Tibial artery (tissue), 4 donors: ENCODE measurements at regions of chr4 and their contacts with region 1.

Region 1: GRCh38 chr4:179615704-179616103 is 2173.5 kb upstream of the AGA start:
- DNase-seq: no peak
- H3K4me3 ChIP-seq: no peak overlapping the region
- H3K27ac ChIP-seq: no peak overlapping the region
- H3K4me1 ChIP-seq: no peaks in the 10 kb centered on the region
- H3K27me3 ChIP-seq: no peaks in the 10 kb centered on the region
- CTCF ChIP-seq: no peak

Region 2: GRCh38 chr4:179465131-179465797 is 150.4 kb before region 1 on chr4:
- intact Hi-C with region 1: no loop called
- DNase-seq: no peak
- H3K4me3 ChIP-seq: no peak overlapping the region
- H3K27ac ChIP-seq: no peak overlapping the region
- H3K4me1 ChIP-seq: no peaks in the 10 kb centered on the region
- H3K27me3 ChIP-seq: no peaks in the 10 kb centered on the region
- CTCF ChIP-seq: no peak

Region 3: DNA sequence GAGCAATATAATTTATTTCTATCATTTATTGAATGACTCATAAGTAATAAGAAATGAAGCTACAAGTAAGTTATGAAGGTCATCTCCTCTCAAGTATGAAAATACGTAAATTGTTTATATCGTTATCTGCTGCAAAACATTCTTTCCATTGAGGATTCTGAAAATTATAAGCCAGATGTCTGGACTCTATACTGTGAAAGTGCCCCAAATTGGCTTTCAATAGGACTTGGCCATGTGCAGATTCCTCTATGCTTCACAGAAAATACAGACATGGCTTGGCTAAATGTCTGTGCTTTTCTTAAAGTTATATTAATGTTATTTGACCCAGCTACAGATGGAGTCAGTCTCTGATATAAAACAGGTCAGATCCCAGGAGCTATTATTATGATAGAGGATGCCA is 63.6 kb before region 1 on chr4:
- intact Hi-C with region 1: no loop called
- DNase-seq: no peak
- H3K4me3 ChIP-seq: no peak overlapping the region
- H3K27ac ChIP-seq: no peak overlapping the region
- H3K4me1 ChIP-seq: no peaks in the 10 kb centered on the region
- H3K27me3 ChIP-seq: no peaks in the 10 kb centered on the region
- CTCF ChIP-seq: no peak

Region 4: DNA sequence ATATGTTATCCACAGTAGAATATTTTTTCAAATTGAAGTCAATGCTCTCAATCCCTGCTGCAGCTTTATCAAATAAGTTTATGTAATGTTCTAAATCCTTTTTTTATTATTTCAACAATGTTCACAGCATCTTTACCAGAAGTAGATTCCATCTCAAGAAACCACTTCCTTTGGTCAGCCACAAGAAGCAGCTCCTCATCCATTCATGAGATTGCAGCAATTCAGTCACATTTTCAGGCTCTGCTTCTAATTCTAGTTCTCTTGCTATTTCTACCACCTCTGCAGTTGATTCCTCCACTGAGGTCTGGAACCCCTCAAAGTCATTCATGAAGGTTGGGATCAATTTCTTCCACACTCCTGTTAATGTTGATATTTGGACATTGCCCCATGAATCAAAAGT is 326.2 kb after region 1 on chr4:
- intact Hi-C with region 1: loop called (anchors 5 kb)
- DNase-seq: no peak
- H3K4me3 ChIP-seq: no peak overlapping the region
- H3K27ac ChIP-seq: no peak overlapping the region
- H3K4me1 ChIP-seq: no peaks in the 10 kb centered on the region
- H3K27me3 ChIP-seq: no peaks in the 10 kb centered on the region
- CTCF ChIP-seq: no peak

Region 5: GRCh38 chr4:180407275-180407885 is 791.7 kb after region 1 on chr4:
- intact Hi-C with region 1: no loop called
- DNase-seq: no peak
- H3K4me3 ChIP-seq: no peak overlapping the region
- H3K27ac ChIP-seq: no peak overlapping the region
- H3K4me1 ChIP-seq: no peaks in the 10 kb centered on the region
- H3K27me3 ChIP-seq: no peaks in the 10 kb centered on the region
- CTCF ChIP-seq: no peak